ENCODE measurements at regions of chr7 and their contacts with region 1.

Region 1: GRCh38 chr7:76179686-76180085 is 22.0 kb upstream of the SRRM3 start:
- DNase-seq: no peak
- ATAC-seq: no peak
- H3K4me3 ChIP-seq: no peak overlapping the region
- H3K27ac ChIP-seq: no peak overlapping the region
- H3K4me1 ChIP-seq: no peaks in the 10 kb centered on the region
- H3K27me3 ChIP-seq: no peaks in the 10 kb centered on the region

Region 2: DNA sequence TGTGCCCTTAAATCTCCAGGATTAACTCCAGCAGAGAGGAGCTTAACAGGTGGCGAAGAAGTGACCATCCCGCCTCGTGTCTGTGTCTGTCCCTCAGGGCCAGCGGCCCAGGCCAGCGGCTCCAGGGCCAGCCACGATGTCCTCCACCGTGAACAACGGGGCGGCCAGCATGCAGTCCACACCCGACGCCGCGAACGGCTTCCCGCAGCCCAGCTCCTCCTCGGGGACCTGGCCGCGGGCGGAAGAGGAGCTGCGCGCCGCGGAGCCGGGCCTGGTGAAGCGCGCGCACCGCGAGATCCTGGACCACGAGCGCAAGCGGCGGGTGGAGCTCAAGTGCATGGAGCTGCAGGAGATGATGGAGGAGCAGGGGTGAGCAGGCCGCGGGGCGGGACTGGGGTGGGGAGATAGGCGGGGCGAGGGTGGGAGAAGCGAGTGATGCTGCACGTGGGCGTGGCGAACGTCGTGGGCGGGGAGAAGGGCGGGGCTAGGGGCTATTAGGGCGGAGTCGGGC is 55.3 kb after region 1 on chr7:
- intact Hi-C with region 1: no loop called
- DNase-seq: peak; percentile 77 to 89 (median 82)
- ATAC-seq: peak; percentile 89 to 95
- H3K4me3 ChIP-seq: no peak overlapping the region
- H3K27ac ChIP-seq: no peak overlapping the region
- H3K4me1 ChIP-seq: no peaks in the 10 kb centered on the region
- H3K27me3 ChIP-seq: no peaks in the 10 kb centered on the region

Region 3: DNA sequence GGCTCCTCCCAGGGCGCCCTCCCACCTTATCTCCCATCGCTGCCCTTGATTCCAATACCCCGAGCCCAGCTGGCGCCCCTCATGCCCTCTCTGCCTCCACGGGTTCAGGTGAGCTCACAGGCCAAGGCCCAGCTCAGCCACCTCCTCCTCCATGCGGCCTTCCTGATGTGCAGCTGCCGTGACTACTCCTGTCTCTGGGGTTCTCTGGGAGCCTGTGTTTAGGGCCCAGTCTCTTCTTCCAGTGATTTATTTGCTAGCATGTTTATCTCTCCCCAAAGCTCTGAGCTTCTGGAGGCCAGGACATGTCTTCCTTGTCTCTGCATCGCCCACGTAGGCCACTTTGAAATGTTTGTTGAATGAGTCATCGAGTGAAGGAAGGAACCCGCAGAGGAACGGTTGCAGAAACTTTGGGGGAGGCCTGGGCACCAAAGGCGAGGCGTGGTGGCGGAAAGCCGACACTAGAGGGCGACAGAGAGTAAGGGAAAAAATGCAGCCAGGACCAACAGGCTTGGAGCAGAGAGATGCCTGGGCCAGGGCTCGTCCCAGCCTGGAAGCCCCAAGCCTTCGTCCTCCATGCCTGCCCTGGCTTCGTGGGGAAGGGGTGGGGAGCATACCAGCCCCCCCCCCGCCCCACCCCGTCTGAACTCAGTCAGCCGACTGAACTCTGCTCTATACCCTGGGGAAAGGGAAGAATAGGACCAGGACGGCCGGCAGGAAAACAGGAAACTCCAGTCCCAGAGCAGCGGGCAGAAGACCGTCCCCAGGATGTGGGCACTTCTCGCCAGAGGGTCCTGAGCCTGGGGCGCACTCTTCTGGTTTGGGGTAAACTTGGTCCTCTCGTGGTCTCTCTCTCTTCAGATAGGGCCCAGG is 111.9 kb after region 1 on chr7:
- intact Hi-C with region 1: loop called in 2 of 4 experiments (anchors 5 to 10 kb)
- DNase-seq: peak; percentile 94 to 96 (median 95)
- ATAC-seq: peak; percentile 85 to 88
- H3K4me3 ChIP-seq: peak overlapping the region; percentile 11
- H3K27ac ChIP-seq: peak overlapping the region; percentile 97
- H3K4me1 ChIP-seq: peaks cover 17% of the 10 kb centered on the region
- H3K27me3 ChIP-seq: no peaks in the 10 kb centered on the region

Measured in right cardiac atrium (tissue), 5 donors.